ENCODE measurements at regions of chr16 and their contacts with region 1.

Region 1: DNA sequence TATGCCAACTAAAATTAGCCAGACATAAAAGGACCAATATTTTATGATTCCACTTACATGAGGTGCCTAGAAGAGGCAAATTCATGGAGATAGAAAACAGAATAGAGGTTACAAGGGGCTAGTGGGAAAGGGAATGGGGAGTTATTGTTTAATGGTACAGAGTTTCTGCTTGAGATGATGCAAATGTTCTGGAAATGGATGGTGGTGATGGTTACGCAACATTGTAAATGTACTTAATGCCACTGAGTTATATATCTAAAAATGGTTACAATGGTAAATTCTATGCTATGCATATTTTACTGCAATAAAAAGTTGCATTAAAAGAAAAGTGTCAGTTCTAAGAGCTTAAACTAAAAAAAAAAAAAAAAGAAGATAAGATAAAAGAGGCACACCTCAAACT is 17.9 kb downstream of the MT1X start:
- DNase-seq: no peak
- ATAC-seq: no peak
- H3K4me3 ChIP-seq: no peak overlapping the region
- H3K4me3 Mint-ChIP-seq: no peak overlapping the region
- H3K27ac ChIP-seq: no peak overlapping the region
- H3K27ac Mint-ChIP-seq: no peak overlapping the region
- H3K4me1 ChIP-seq: no peaks in the 10 kb centered on the region
- H3K4me1 Mint-ChIP-seq: peaks cover 0 to 7% of the 10 kb centered on the region in 2 donors
- H3K27me3 ChIP-seq: no peaks in the 10 kb centered on the region
- H3K27me3 Mint-ChIP-seq: no peaks in the 10 kb centered on the region
- CTCF ChIP-seq: no peak

Region 2: GRCh38 chr16:55949518-55949917 is 750.7 kb before region 1 on chr16:
- intact Hi-C with region 1: loop called (anchors 5 kb)
- DNase-seq: no peak
- ATAC-seq: no peak
- H3K4me3 ChIP-seq: no peak overlapping the region
- H3K4me3 Mint-ChIP-seq: no peak overlapping the region
- H3K27ac ChIP-seq: no peak overlapping the region
- H3K27ac Mint-ChIP-seq: no peak overlapping the region
- H3K4me1 ChIP-seq: no peaks in the 10 kb centered on the region
- H3K4me1 Mint-ChIP-seq: no peaks in the 10 kb centered on the region
- H3K27me3 ChIP-seq: peaks cover 3% of the 10 kb centered on the region
- H3K27me3 Mint-ChIP-seq: peaks cover 24 to 66% of the 10 kb centered on the region in 2 donors
- CTCF ChIP-seq: no peak

Region 3: GRCh38 chr16:56513972-56514371 is 186.2 kb before region 1 on chr16:
- intact Hi-C with region 1: loop called (anchors 2 kb)
- DNase-seq: peak; percentile 18 to 74
- ATAC-seq: peak; percentile 64 to 85 (median 77)
- H3K4me3 ChIP-seq: no peak overlapping the region
- H3K4me3 Mint-ChIP-seq: no peak overlapping the region
- H3K27ac ChIP-seq: no peak overlapping the region
- H3K27ac Mint-ChIP-seq: peak overlapping the region; percentile 37 to 50
- H3K4me1 ChIP-seq: peaks cover 1% of the 10 kb centered on the region
- H3K4me1 Mint-ChIP-seq: peaks cover 14 to 17% of the 10 kb centered on the region in 2 donors
- H3K27me3 ChIP-seq: no peaks in the 10 kb centered on the region
- H3K27me3 Mint-ChIP-seq: no peaks in the 10 kb centered on the region
- CTCF ChIP-seq: peak; percentile 72

Region 4: GRCh38 chr16:56576585-56577293 is 123.5 kb before region 1 on chr16:
- intact Hi-C with region 1: loop called (anchors 1 kb)
- DNase-seq: peak; percentile 79 to 92
- ATAC-seq: peak; percentile 98 to 100 (median 99)
- H3K4me3 ChIP-seq: no peak overlapping the region
- H3K4me3 Mint-ChIP-seq: no peak overlapping the region
- H3K27ac ChIP-seq: no peak overlapping the region
- H3K27ac Mint-ChIP-seq: no peak overlapping the region
- H3K4me1 ChIP-seq: peaks cover 7% of the 10 kb centered on the region
- H3K4me1 Mint-ChIP-seq: peaks cover 0 to 4% of the 10 kb centered on the region in 2 donors
- H3K27me3 ChIP-seq: no peaks in the 10 kb centered on the region
- H3K27me3 Mint-ChIP-seq: peaks cover 0 to 16% of the 10 kb centered on the region in 2 donors
- CTCF ChIP-seq: peak; percentile 76

Region 5: GRCh38 chr16:56729735-56730662 is 29.8 kb after region 1 on chr16 and contains the start of gene NUP93:
- intact Hi-C with region 1: loop called (anchors 2 kb)
- DNase-seq: peak; percentile 82 to 94
- ATAC-seq: peak; percentile 96 to 98 (median 98)
- H3K4me3 ChIP-seq: peak within 1 kb of the TSS; percentile 90
- H3K4me3 Mint-ChIP-seq: no peak within 1 kb of the TSS
- H3K27ac ChIP-seq: peak within 1 kb of the TSS; percentile 62
- H3K27ac Mint-ChIP-seq: peak within 1 kb of the TSS in 1 of 2 donors; percentile 85
- H3K4me1 ChIP-seq: peaks cover 14% of the 10 kb centered on the region
- H3K4me1 Mint-ChIP-seq: peaks cover 12% of the 10 kb centered on the region in 2 donors
- H3K27me3 ChIP-seq: no peaks in the 10 kb centered on the region
- H3K27me3 Mint-ChIP-seq: no peaks in the 10 kb centered on the region
- CTCF ChIP-seq: no peak
- total RNA-seq, gene NUP93: 83.7 to 88.8 (median 87.9) TPM

Region 6: DNA sequence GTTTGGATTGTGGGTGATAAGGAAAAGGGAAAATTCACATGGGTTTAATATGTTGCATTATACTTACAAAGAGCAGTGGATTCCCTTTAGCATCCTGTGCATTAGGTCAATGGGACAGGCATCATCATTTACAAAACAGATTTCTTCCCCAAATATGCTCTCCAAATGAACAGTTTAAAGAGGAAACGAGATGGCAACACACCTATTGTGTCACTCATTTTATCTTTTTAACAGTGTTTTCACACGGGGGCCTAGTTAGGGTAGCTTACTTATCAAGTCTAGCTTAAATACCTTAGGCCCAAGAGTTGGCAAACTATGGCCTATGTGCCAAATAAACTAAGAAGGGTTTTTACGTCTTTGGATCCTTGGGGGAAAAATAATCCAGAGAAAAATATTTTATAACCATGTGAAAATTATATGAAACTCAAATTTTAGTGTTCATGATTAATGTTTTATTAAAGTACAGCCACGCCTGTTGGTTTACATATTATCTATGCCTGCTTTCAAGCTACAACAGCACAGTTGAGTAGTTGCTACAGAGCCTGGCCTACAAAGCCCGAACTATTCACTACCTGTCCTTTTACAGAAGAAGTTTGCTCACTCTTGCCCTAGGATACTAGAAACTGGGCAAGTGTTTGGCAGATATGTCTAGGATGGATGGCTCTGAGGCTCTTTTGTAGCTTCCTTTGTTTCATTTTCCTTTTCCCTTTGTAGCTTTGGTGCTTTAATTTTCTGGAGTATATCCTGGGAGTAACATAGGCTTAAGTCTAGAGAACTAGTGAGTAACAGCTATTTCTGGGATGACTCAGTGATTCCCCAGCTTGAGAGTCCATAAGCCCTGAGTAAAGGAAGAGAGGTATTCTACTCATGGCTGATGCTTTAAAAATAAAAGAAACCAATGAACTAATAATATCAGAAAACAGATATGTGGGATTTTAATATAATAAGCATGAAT is 42.1 kb after region 1 on chr16:
- intact Hi-C with region 1: no loop called
- DNase-seq: no peak
- ATAC-seq: no peak
- H3K4me3 ChIP-seq: no peak overlapping the region
- H3K4me3 Mint-ChIP-seq: no peak overlapping the region
- H3K27ac ChIP-seq: no peak overlapping the region
- H3K27ac Mint-ChIP-seq: peak overlapping the region in 1 of 2 donors; percentile 1
- H3K4me1 ChIP-seq: no peaks in the 10 kb centered on the region
- H3K4me1 Mint-ChIP-seq: peaks cover 25 to 31% of the 10 kb centered on the region in 2 donors
- H3K27me3 ChIP-seq: no peaks in the 10 kb centered on the region
- H3K27me3 Mint-ChIP-seq: no peaks in the 10 kb centered on the region
- CTCF ChIP-seq: no peak

Measured in natural killer cell (primary cell).